Activated naive CD4-positive, alpha-beta T cell treated with anti-CD3 and anti-CD28 coated beads for 36 hours (primary cell): ENCODE measurements at regions of chr4 and their contacts with region 1.

Region 1: GRCh38 chr4:86934771-86935565 is at the start of gene AFF1:
- DNase-seq: peak; percentile 89
- H3K4me3 Mint-ChIP-seq: peak within 1 kb of the TSS; percentile 87
- H3K27ac Mint-ChIP-seq: peak within 1 kb of the TSS; percentile 92
- H3K4me1 Mint-ChIP-seq: peaks cover 40% of the 10 kb centered on the region
- H3K27me3 Mint-ChIP-seq: no peaks in the 10 kb centered on the region
- total RNA-seq, gene AFF1: 46.6 to 50.6 TPM

Region 2: GRCh38 chr4:86141161-86141560 is 793.8 kb before region 1 on chr4:
- CTCF ChIA-PET with region 1: no interaction called
- intact Hi-C with region 1: no loop called
- DNase-seq: no peak
- H3K4me3 Mint-ChIP-seq: no peak overlapping the region
- H3K27ac Mint-ChIP-seq: no peak overlapping the region
- H3K4me1 Mint-ChIP-seq: no peaks in the 10 kb centered on the region
- H3K27me3 Mint-ChIP-seq: no peaks in the 10 kb centered on the region

Region 3: DNA sequence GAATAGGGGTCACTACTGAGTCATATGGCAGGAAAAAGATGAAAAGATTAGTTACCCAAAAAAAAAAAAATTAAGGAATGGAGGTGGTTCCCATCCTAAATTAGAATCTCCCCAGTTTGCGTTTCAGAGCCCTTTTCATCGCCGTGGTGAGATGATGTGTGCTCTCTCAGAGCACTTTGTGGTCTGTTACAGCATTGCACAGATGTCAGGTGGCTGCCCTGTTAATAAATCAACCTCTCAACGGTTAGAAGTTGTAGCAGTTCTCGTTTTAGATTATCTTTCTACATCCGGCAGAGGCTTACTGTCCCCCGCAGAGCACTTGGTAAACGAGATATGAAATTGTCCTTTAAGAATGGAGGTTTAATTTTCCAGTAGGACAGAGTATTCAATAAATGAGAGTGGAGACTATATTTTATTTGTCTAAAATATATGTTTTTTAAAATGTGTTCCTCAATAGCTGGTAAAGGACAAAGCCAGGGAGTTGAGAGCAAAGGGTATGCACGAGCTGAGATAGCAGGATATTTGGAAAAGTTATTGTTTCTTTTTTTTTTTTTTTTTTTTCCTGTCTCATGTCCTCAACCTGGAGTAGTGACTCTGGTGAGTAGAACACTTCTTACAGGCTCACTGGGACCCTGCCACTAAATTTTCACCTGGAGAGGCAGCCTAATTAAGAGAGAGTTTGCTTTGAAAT is 26.8 kb after region 1 on chr4:
- CTCF ChIA-PET with region 1: interaction called, 8 read pairs
- intact Hi-C with region 1: loop called (anchors 1 kb)
- DNase-seq: peak; percentile 48
- H3K4me3 Mint-ChIP-seq: no peak overlapping the region
- H3K27ac Mint-ChIP-seq: no peak overlapping the region
- H3K4me1 Mint-ChIP-seq: peaks cover 40% of the 10 kb centered on the region
- H3K27me3 Mint-ChIP-seq: no peaks in the 10 kb centered on the region

Region 4: GRCh38 chr4:87058356-87059073 is 123.5 kb after region 1 on chr4:
- CTCF ChIA-PET with region 1: interaction called, 4 read pairs
- intact Hi-C with region 1: loop called (anchors 1 kb)
- DNase-seq: peak; percentile 68
- H3K4me3 Mint-ChIP-seq: peak overlapping the region; percentile 2
- H3K27ac Mint-ChIP-seq: peak overlapping the region; percentile 24
- H3K4me1 Mint-ChIP-seq: peaks cover 51% of the 10 kb centered on the region
- H3K27me3 Mint-ChIP-seq: no peaks in the 10 kb centered on the region

Region 5: GRCh38 chr4:87093443-87094123 is 158.6 kb after region 1 on chr4:
- CTCF ChIA-PET with region 1: interaction called, 24 read pairs
- intact Hi-C with region 1: loop called (anchors 1 kb)
- DNase-seq: peak; percentile 66
- H3K4me3 Mint-ChIP-seq: no peak overlapping the region
- H3K27ac Mint-ChIP-seq: peak overlapping the region; percentile 53
- H3K4me1 Mint-ChIP-seq: peaks cover 44% of the 10 kb centered on the region
- H3K27me3 Mint-ChIP-seq: no peaks in the 10 kb centered on the region

Region 6: DNA sequence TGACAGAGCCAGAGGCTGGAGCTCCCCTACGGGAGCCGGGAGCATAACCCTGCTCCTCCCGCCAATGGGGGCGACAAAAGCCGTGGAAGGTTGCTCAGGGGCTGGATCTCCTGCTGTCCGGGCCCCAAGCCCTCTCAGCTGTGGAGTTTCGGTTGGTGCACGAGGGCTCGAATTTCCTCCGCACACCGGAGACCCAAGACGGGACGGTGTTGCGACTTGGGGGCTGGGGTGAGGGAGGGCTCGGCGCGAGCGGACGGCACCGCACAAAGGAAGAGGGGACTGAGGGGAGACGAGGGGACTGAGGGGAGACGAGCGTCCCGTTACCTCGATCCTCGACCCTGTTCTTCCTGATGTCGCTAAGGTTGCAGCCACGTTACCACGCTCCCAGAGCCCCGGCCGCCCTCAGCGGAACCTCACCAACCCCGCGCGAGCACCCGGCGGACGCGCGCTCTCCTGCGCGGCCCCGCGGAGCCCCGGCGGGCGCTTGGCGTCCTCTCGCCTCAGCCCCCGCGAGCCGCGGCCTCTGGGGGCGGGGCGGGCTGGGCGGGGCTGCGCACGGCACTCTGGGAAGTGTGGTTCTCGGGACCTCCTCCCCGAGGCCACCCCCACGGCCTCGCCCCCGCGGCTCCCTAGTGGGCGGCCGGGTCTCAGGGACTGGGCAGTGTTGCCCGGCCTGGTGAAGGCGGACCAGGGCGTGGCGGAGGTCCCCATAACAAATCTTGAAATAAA is 285.3 kb after region 1 on chr4 and contains the start of gene KLHL8:
- CTCF ChIA-PET with region 1: interaction called, 3 read pairs
- intact Hi-C with region 1: loop called (anchors 1 kb)
- DNase-seq: peak; percentile 85
- H3K4me3 Mint-ChIP-seq: peak within 1 kb of the TSS; percentile 84
- H3K27ac Mint-ChIP-seq: peak within 1 kb of the TSS; percentile 82
- H3K4me1 Mint-ChIP-seq: peaks cover 16% of the 10 kb centered on the region
- H3K27me3 Mint-ChIP-seq: no peaks in the 10 kb centered on the region
- total RNA-seq, gene KLHL8: 10.7 to 12.1 TPM